ENCODE measurements at regions of chr12 and their contacts with region 1.

Region 1: DNA sequence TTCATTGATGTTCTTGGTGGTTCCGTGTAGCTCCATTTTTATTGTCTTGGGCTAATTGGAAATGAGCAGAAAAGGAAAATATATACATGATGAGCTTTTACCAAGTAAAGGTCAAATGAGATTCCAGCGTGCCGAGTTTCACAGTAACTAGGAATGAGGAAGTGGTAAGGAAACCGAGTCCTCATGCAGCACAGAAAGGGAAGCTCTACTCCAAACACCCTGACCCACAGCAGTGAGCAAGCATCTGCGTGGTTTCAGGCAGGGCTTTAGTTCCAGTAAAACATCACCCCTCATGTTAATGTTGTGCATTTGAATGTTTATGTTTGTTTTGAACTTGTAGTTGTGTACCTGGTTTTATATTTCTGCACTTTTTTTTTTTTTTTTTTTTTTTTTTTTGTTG is 208.0 kb downstream of the SLC41A2 start:
- DNase-seq: peak; percentile 44 to 84
- H3K4me3 ChIP-seq: no peak overlapping the region
- H3K27ac ChIP-seq: peak overlapping the region; percentile 76
- H3K4me1 ChIP-seq: peaks cover 22% of the 10 kb centered on the region
- H3K27me3 ChIP-seq: no peaks in the 10 kb centered on the region
- CTCF ChIP-seq: no peak

Region 2: GRCh38 chr12:104722601-104723534 is 27.2 kb before region 1 on chr12:
- CTCF ChIA-PET with region 1: no interaction called
- POLR2A ChIA-PET with region 1: interaction called, 23 read pairs
- intact Hi-C with region 1: no loop called
- DNase-seq: no peak
- H3K4me3 ChIP-seq: no peak overlapping the region
- H3K27ac ChIP-seq: no peak overlapping the region
- H3K4me1 ChIP-seq: no peaks in the 10 kb centered on the region
- H3K27me3 ChIP-seq: no peaks in the 10 kb centered on the region
- CTCF ChIP-seq: no peak

Region 3: GRCh38 chr12:104998423-104999346 is 248.6 kb after region 1 on chr12:
- CTCF ChIA-PET with region 1: interaction called, 14 read pairs
- POLR2A ChIA-PET with region 1: no interaction called
- intact Hi-C with region 1: no loop called
- DNase-seq: peak in 1 of 2 experiments; percentile 10
- H3K4me3 ChIP-seq: no peak overlapping the region
- H3K27ac ChIP-seq: no peak overlapping the region
- H3K4me1 ChIP-seq: no peaks in the 10 kb centered on the region
- H3K27me3 ChIP-seq: no peaks in the 10 kb centered on the region
- CTCF ChIP-seq: no peak